CD8-positive, alpha-beta T cell (primary cell): ENCODE measurements at regions of chr2 and their contacts with region 1.

Region 1: DNA sequence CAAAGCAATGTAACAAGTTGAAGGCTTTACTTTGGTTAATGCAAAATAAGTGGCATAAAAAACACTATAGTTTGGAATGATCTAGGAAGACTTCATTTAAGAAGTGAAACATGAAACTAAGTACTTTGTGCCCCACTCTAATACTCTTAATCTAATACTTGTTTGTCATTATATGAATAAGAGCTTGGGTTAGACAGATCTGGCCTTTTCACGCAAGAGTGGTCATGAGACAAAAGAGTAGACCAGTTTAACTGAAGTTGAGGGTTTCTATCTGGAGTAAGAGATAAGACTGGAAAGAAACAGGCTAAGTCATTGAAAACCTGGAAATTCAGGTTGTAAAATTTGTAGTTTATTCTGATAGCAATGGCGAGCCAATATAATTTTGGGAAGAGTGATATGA is 2.8 kb downstream of the SLC30A6 start:
- DNase-seq: no peak
- ATAC-seq: no peak
- H3K4me3 ChIP-seq: no peak overlapping the region
- H3K4me3 Mint-ChIP-seq: no peak overlapping the region
- H3K27ac ChIP-seq: no peak overlapping the region
- H3K27ac Mint-ChIP-seq: peak overlapping the region; percentile 29
- H3K4me1 ChIP-seq: peaks cover 12% of the 10 kb centered on the region
- H3K4me1 Mint-ChIP-seq: peaks cover 53% of the 10 kb centered on the region
- H3K27me3 ChIP-seq: no peaks in the 10 kb centered on the region
- H3K27me3 Mint-ChIP-seq: no peaks in the 10 kb centered on the region
- CTCF ChIP-seq: no peak

Region 2: GRCh38 chr2:32010670-32011484 is 157.6 kb before region 1 on chr2 and contains the start of gene MEMO1:
- CTCF ChIA-PET with region 1: no interaction called
- POLR2A ChIA-PET with region 1: interaction called, 5 read pairs
- intact Hi-C with region 1: loop called (anchors 1 to 5 kb)
- DNase-seq: peak; percentile 76 to 95 (median 92)
- ATAC-seq: peak; percentile 76
- H3K4me3 ChIP-seq: peak within 1 kb of the TSS; percentile 66 to 74
- H3K4me3 Mint-ChIP-seq: peak within 1 kb of the TSS; percentile 85
- H3K27ac ChIP-seq: peak within 1 kb of the TSS; percentile 44 to 79
- H3K27ac Mint-ChIP-seq: peak within 1 kb of the TSS; percentile 91
- H3K4me1 ChIP-seq: peaks cover 17% of the 10 kb centered on the region
- H3K4me1 Mint-ChIP-seq: peaks cover 38% of the 10 kb centered on the region
- H3K27me3 ChIP-seq: no peaks in the 10 kb centered on the region
- H3K27me3 Mint-ChIP-seq: no peaks in the 10 kb centered on the region
- CTCF ChIP-seq: no peak
- total RNA-seq, gene MEMO1: 32.7 to 34.5 TPM

Region 3: GRCh38 chr2:32039447-32040219 is 128.9 kb before region 1 on chr2 and contains the start of gene DPY30:
- CTCF ChIA-PET with region 1: no interaction called
- POLR2A ChIA-PET with region 1: interaction called, 10 read pairs
- intact Hi-C with region 1: no loop called
- DNase-seq: peak; percentile 76 to 95 (median 91)
- ATAC-seq: peak; percentile 96
- H3K4me3 ChIP-seq: peak within 1 kb of the TSS; percentile 81 to 83
- H3K4me3 Mint-ChIP-seq: peak within 1 kb of the TSS; percentile 94
- H3K27ac ChIP-seq: peak within 1 kb of the TSS; percentile 64 to 86
- H3K27ac Mint-ChIP-seq: peak within 1 kb of the TSS; percentile 98
- H3K4me1 ChIP-seq: peaks cover 8% of the 10 kb centered on the region
- H3K4me1 Mint-ChIP-seq: peaks cover 20% of the 10 kb centered on the region
- H3K27me3 ChIP-seq: no peaks in the 10 kb centered on the region
- H3K27me3 Mint-ChIP-seq: no peaks in the 10 kb centered on the region
- CTCF ChIP-seq: no peak
- total RNA-seq, gene DPY30: 9.6 to 10.8 TPM

Region 4: GRCh38 chr2:32063310-32064161 is 105.0 kb before region 1 on chr2 and contains the start of gene SPAST:
- CTCF ChIA-PET with region 1: no interaction called
- POLR2A ChIA-PET with region 1: interaction called, 12 read pairs
- intact Hi-C with region 1: loop called (anchors 1 to 2 kb)
- DNase-seq: peak; percentile 91 to 99 (median 96)
- ATAC-seq: peak; percentile 88
- H3K4me3 ChIP-seq: peak within 1 kb of the TSS; percentile 72 to 98
- H3K4me3 Mint-ChIP-seq: peak within 1 kb of the TSS; percentile 99
- H3K27ac ChIP-seq: peak within 1 kb of the TSS; percentile 76 to 81
- H3K27ac Mint-ChIP-seq: peak within 1 kb of the TSS; percentile 96
- H3K4me1 ChIP-seq: peaks cover 20% of the 10 kb centered on the region
- H3K4me1 Mint-ChIP-seq: peaks cover 36% of the 10 kb centered on the region
- H3K27me3 ChIP-seq: no peaks in the 10 kb centered on the region
- H3K27me3 Mint-ChIP-seq: no peaks in the 10 kb centered on the region
- CTCF ChIP-seq: peak; percentile 49
- total RNA-seq, gene SPAST: 7.4 to 9.4 TPM

Region 5: GRCh38 chr2:32277674-32278482 is 109.4 kb after region 1 on chr2 and contains the start of gene YIPF4:
- CTCF ChIA-PET with region 1: no interaction called
- POLR2A ChIA-PET with region 1: no interaction called
- intact Hi-C with region 1: loop called (anchors 1 kb)
- DNase-seq: peak; percentile 83 to 95 (median 90)
- ATAC-seq: peak; percentile 97
- H3K4me3 ChIP-seq: peak within 1 kb of the TSS; percentile 96 to 97
- H3K4me3 Mint-ChIP-seq: peak within 1 kb of the TSS; percentile 85
- H3K27ac ChIP-seq: peak within 1 kb of the TSS; percentile 58 to 93
- H3K27ac Mint-ChIP-seq: peak within 1 kb of the TSS; percentile 95
- H3K4me1 ChIP-seq: peaks cover 34% of the 10 kb centered on the region
- H3K4me1 Mint-ChIP-seq: peaks cover 36% of the 10 kb centered on the region
- H3K27me3 ChIP-seq: no peaks in the 10 kb centered on the region
- H3K27me3 Mint-ChIP-seq: no peaks in the 10 kb centered on the region
- CTCF ChIP-seq: no peak
- total RNA-seq, gene YIPF4: 10.4 to 10.9 TPM

Region 6: GRCh38 chr2:32314886-32315285 is 146.4 kb after region 1 on chr2:
- CTCF ChIA-PET with region 1: no interaction called
- POLR2A ChIA-PET with region 1: no interaction called
- intact Hi-C with region 1: no loop called
- DNase-seq: no peak
- ATAC-seq: no peak
- H3K4me3 ChIP-seq: no peak overlapping the region
- H3K4me3 Mint-ChIP-seq: no peak overlapping the region
- H3K27ac ChIP-seq: no peak overlapping the region
- H3K27ac Mint-ChIP-seq: no peak overlapping the region
- H3K4me1 ChIP-seq: no peaks in the 10 kb centered on the region
- H3K4me1 Mint-ChIP-seq: no peaks in the 10 kb centered on the region
- H3K27me3 ChIP-seq: no peaks in the 10 kb centered on the region
- H3K27me3 Mint-ChIP-seq: no peaks in the 10 kb centered on the region
- CTCF ChIP-seq: no peak

Region 7: GRCh38 chr2:32627814-32628579 is 459.5 kb after region 1 on chr2 and contains the start of gene TTC27:
- CTCF ChIA-PET with region 1: no interaction called
- POLR2A ChIA-PET with region 1: interaction called, 3 read pairs
- intact Hi-C with region 1: loop called in 1 of 2 experiments (anchors 2 kb)
- DNase-seq: peak; percentile 87 to 96 (median 95)
- ATAC-seq: peak; percentile 99
- H3K4me3 ChIP-seq: peak within 1 kb of the TSS; percentile 82 to 89
- H3K4me3 Mint-ChIP-seq: peak within 1 kb of the TSS; percentile 93
- H3K27ac ChIP-seq: peak within 1 kb of the TSS; percentile 73
- H3K27ac Mint-ChIP-seq: peak within 1 kb of the TSS; percentile 90
- H3K4me1 ChIP-seq: no peaks in the 10 kb centered on the region
- H3K4me1 Mint-ChIP-seq: peaks cover 35% of the 10 kb centered on the region
- H3K27me3 ChIP-seq: no peaks in the 10 kb centered on the region
- H3K27me3 Mint-ChIP-seq: no peaks in the 10 kb centered on the region
- CTCF ChIP-seq: no peak
- total RNA-seq, gene TTC27: 9.6 to 12.1 TPM

Region 8: DNA sequence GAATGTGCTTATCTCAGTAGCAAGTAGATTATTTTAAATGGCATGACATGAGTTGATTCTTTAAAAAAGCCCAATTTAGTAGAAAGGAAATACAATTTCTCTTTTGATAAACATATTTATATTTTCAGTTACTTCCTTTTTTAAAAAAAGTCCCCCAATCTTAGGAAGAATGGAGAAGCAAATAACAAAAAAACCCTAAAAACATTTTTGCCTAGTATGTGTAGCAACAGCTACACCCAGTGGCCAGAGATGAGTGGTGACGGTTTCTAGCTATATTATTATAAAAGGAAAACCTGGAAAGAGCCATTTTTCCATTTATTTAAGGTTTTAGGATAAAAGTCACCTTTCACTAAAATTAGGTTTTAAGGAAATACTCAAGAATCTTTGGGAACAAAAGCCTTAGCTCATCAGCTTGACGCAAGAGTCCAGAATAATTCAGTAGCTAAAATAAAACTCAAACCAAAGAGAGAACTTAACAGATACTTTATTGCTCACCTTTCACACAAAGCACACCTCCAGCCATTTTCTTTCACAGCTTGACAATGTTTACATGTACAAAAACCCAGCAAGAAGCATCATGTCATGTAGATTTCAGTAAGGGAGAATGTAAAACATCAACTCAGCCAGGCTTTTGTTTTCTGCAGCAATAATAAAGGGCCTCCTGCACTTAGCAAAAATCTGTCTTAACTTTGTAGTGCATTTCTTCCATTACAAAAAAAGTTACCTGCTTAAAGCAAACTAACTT is 1414.9 kb after region 1 on chr2:
- CTCF ChIA-PET with region 1: no interaction called
- POLR2A ChIA-PET with region 1: no interaction called
- intact Hi-C with region 1: no loop called
- DNase-seq: peak in 6 of 9 experiments; percentile 16 to 65 (median 22)
- ATAC-seq: no peak
- H3K4me3 ChIP-seq: no peak overlapping the region
- H3K4me3 Mint-ChIP-seq: no peak overlapping the region
- H3K27ac ChIP-seq: no peak overlapping the region
- H3K27ac Mint-ChIP-seq: no peak overlapping the region
- H3K4me1 ChIP-seq: no peaks in the 10 kb centered on the region
- H3K4me1 Mint-ChIP-seq: peaks cover 4% of the 10 kb centered on the region
- H3K27me3 ChIP-seq: no peaks in the 10 kb centered on the region
- H3K27me3 Mint-ChIP-seq: no peaks in the 10 kb centered on the region
- CTCF ChIP-seq: peak; percentile 96

Region 9: DNA sequence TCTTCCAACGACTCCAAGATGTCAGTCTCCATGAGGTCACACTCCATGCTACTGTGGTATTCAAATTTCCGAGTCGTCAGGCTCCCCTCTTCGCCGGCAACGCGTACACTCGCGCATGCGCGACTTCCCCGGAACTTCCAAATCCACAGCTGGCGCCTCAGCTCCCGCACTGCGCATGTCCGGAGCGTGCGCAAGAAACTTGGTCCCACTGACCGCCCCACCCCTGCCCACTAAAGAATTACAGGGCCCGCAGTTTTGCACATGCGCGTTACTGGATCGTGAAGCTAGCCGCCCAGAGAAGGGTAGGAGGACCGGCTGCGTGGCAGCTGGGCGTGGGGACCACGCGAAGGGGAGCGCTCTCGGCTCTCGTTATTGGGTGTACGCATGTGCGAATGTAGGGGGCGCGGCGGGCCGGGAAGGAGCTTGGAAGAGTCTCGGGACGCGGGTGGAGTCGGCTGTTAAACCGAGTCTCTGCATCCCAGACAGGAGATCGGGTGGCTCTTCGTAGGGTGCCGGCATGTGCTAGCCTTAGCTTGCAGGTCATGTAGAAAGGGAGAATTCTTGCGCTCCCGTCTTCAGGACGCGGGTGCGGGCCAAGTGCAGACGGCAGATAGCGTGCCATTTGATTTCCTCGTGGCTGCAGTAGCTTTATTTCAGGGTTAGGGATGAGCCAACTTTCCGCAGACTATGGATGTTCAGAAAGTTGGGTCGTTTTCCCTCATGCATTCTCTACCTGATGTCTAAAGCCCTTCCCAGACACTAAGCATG is 1430.8 kb after region 1 on chr2 and contains the start of gene FAM98A:
- CTCF ChIA-PET with region 1: no interaction called
- POLR2A ChIA-PET with region 1: no interaction called
- intact Hi-C with region 1: loop called (anchors 5 kb)
- DNase-seq: peak; percentile 96 to 100 (median 99)
- ATAC-seq: peak; percentile 91
- H3K4me3 ChIP-seq: peak within 1 kb of the TSS; percentile 92 to 94
- H3K4me3 Mint-ChIP-seq: peak within 1 kb of the TSS; percentile 99
- H3K27ac ChIP-seq: peak within 1 kb of the TSS; percentile 83 to 85
- H3K27ac Mint-ChIP-seq: peak within 1 kb of the TSS; percentile 96
- H3K4me1 ChIP-seq: peaks cover 22% of the 10 kb centered on the region
- H3K4me1 Mint-ChIP-seq: peaks cover 34% of the 10 kb centered on the region
- H3K27me3 ChIP-seq: no peaks in the 10 kb centered on the region
- H3K27me3 Mint-ChIP-seq: no peaks in the 10 kb centered on the region
- CTCF ChIP-seq: no peak
- total RNA-seq, gene FAM98A: 15.9 to 21.0 TPM